ENCODE measurements at regions of chr16 and their contacts with region 1.

Region 1: DNA sequence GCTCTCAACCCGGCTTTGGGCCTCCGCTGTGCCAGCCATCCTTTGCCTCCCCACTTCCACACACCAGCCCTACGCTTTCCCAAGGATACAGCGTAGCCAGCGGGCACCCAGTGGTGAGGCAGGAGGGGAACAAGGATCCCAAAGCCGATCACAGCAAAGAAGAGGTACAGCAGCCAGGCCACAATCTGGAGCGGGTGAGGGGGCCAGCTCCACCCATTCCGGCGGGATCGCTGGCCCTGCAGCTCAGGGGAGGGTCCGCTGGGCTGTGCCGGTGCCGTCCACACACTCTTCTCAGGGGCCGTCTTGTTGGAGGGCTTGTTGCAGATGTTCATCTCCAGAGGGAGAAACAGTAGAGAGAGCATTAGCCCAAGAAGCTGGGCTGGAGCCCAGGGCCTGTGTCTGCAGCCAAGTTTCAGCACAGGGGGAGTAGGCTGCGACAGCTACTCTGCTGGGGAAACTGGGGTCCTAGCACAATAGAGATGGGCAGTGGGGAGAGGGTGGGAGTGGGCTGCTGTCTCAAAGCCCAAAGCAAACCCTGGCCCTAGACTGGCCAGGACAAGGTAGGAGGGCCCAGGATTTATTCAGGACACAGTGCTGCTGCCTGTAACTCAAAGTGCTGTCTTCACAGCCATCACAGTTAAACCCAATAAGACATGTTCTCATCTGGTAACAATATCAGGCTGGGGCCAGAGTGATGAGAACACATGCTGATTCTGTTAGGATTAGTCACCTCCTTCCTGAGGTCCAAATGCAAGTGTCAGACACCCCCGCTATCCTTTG is 10.0 kb downstream of the ZDHHC1 start:
- DNase-seq: no peak
- H3K4me3 ChIP-seq: no peak overlapping the region
- H3K27ac ChIP-seq: peak overlapping the region; percentile 86; the same call in 1 of the 2 replicates
- H3K4me1 ChIP-seq: peaks cover 33% of the 10 kb centered on the region
- H3K27me3 ChIP-seq: no peaks in the 10 kb centered on the region
- CTCF ChIP-seq: no peak

Region 2: GRCh38 chr16:67084345-67085028 is 321.8 kb before region 1 on chr16:
- CTCF ChIA-PET with region 1: no interaction called
- POLR2A ChIA-PET with region 1: no interaction called
- intact Hi-C with region 1: no loop called
- DNase-seq: no peak
- H3K4me3 ChIP-seq: no peak overlapping the region
- H3K27ac ChIP-seq: no peak overlapping the region
- H3K4me1 ChIP-seq: no peaks in the 10 kb centered on the region
- H3K27me3 ChIP-seq: no peaks in the 10 kb centered on the region
- CTCF ChIP-seq: no peak

Region 3: GRCh38 chr16:67480833-67481560 is 74.7 kb after region 1 on chr16 and contains the start of gene ATP6V0D1:
- CTCF ChIA-PET with region 1: interaction called, 10 read pairs
- POLR2A ChIA-PET with region 1: no interaction called
- intact Hi-C with region 1: no loop called
- DNase-seq: peak; percentile 92 to 98
- H3K4me3 ChIP-seq: peak within 1 kb of the TSS; percentile 71
- H3K27ac ChIP-seq: peak within 1 kb of the TSS; percentile 31
- H3K4me1 ChIP-seq: peaks cover 14% of the 10 kb centered on the region
- H3K27me3 ChIP-seq: no peaks in the 10 kb centered on the region
- CTCF ChIP-seq: peak; percentile 81
- total RNA-seq, gene ATP6V0D1: 51.5 and 61.0 TPM in 2 replicates

Region 4: GRCh38 chr16:67999985-68000384 is 593.7 kb after region 1 on chr16:
- CTCF ChIA-PET with region 1: no interaction called
- POLR2A ChIA-PET with region 1: no interaction called
- intact Hi-C with region 1: no loop called
- DNase-seq: no peak
- H3K4me3 ChIP-seq: no peak overlapping the region
- H3K27ac ChIP-seq: no peak overlapping the region
- H3K4me1 ChIP-seq: peaks cover 4% of the 10 kb centered on the region
- H3K27me3 ChIP-seq: no peaks in the 10 kb centered on the region
- CTCF ChIP-seq: no peak

Measured in PC-9 (cell line).